ENCODE measurements at regions of chr4 and their contacts with region 1.

Region 1: DNA sequence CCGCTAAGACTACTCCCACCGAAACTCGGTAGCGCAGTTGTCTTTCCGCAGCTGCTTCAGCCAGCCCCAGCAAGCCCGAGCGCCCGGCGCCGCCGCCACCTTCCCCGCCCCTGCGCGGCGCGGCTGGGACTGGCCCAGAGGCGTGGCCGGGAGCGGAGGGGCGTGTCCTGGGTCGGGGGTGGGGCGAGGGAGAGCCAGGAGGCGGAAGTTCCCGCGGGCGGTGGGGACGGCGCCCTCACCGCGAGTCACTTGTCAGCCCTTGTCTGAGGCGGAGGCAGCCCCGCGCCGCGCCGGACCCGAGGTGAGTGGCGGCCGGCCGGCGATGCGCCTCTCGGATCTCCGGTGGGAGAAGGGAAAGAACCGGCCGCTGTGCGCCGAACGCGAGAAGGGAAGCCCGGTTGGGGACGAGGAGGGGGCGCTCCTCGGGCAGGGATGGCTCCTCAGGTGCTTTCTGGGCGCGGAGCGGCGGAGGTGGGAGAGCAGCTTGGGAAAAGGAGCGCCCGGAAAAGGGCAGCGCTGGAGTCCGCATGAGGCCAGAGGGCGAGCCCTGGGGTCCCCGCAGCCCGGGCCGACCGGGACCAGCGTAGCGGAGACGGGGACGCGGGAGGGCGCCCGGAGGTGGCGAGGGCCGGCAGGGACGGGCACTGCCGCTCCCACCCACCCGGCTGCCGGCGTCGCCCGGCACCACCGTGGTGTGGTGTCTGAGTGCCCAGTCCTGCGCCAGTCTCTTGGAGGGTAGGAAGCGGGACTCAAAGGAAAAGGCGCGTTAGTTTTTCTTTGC is at the start of gene PDLIM5:
- DNase-seq: peak; percentile 74 to 95
- H3K4me3 ChIP-seq: peak within 1 kb of the TSS; percentile 94 to 100
- H3K27ac ChIP-seq: peak within 1 kb of the TSS; percentile 100
- H3K4me1 ChIP-seq: peaks cover under 1 to 22% of the 10 kb centered on the region in 2 donors
- H3K27me3 ChIP-seq: no peaks in the 10 kb centered on the region
- CTCF ChIP-seq: no peak
- total RNA-seq, gene PDLIM5: 103 TPM

Region 2: DNA sequence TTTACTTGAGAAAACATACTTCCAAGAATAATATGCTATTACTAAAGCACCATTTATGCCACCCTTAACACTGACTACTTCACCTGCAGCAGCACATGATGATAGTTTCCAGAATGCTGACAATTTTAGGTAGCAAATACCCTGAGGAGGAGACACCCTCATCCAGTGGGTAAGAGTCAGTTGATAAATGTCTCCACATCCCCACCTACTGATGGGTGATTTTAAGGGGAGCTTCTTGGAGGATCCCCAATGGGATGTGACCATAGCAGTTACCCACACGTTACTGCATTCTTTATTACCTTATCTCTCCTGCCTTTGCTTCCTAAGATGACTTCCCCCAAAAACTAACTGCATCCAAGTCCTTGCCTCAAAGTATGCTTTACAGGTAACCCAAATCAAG is 375.4 kb before region 1 on chr4:
- intact Hi-C with region 1: no loop called
- DNase-seq: no peak
- H3K4me3 ChIP-seq: no peak overlapping the region
- H3K27ac ChIP-seq: no peak overlapping the region
- H3K4me1 ChIP-seq: no peaks in the 10 kb centered on the region
- H3K27me3 ChIP-seq: no peaks in the 10 kb centered on the region
- CTCF ChIP-seq: no peak

Region 3: GRCh38 chr4:94274912-94275311 is 177.0 kb before region 1 on chr4:
- intact Hi-C with region 1: no loop called
- DNase-seq: no peak
- H3K4me3 ChIP-seq: no peak overlapping the region
- H3K27ac ChIP-seq: no peak overlapping the region
- H3K4me1 ChIP-seq: no peaks in the 10 kb centered on the region
- H3K27me3 ChIP-seq: no peaks in the 10 kb centered on the region
- CTCF ChIP-seq: no peak

Region 4: GRCh38 chr4:94406668-94407437 is 45.0 kb before region 1 on chr4:
- intact Hi-C with region 1: loop called (anchors 1 kb)
- DNase-seq: peak in 1 of 2 donors; percentile 91
- H3K4me3 ChIP-seq: peak overlapping the region in 1 of 2 donors; percentile 57
- H3K27ac ChIP-seq: peak overlapping the region; percentile 80 to 82
- H3K4me1 ChIP-seq: peaks cover 10 to 26% of the 10 kb centered on the region in 2 donors
- H3K27me3 ChIP-seq: no peaks in the 10 kb centered on the region
- CTCF ChIP-seq: peak; percentile 34 to 88 (median 86)

Region 5: GRCh38 chr4:94507708-94508107 is 55.8 kb after region 1 on chr4:
- intact Hi-C with region 1: loop called (anchors 5 kb)
- DNase-seq: peak in 1 of 2 donors; percentile 86
- H3K4me3 ChIP-seq: no peak overlapping the region
- H3K27ac ChIP-seq: peak overlapping the region; percentile 43 to 70
- H3K4me1 ChIP-seq: peaks cover 7 to 65% of the 10 kb centered on the region in 2 donors
- H3K27me3 ChIP-seq: no peaks in the 10 kb centered on the region
- CTCF ChIP-seq: no peak

Region 6: GRCh38 chr4:94519925-94520789 is 68.3 kb after region 1 on chr4:
- intact Hi-C with region 1: loop called (anchors 5 kb)
- DNase-seq: no peak
- H3K4me3 ChIP-seq: no peak overlapping the region
- H3K27ac ChIP-seq: peak overlapping the region in 1 of 2 donors; percentile 17
- H3K4me1 ChIP-seq: peaks cover 0 to 80% of the 10 kb centered on the region in 2 donors
- H3K27me3 ChIP-seq: no peaks in the 10 kb centered on the region
- CTCF ChIP-seq: no peak

Region 7: GRCh38 chr4:94571298-94571697 is 119.4 kb after region 1 on chr4:
- intact Hi-C with region 1: loop called (anchors 5 kb)
- DNase-seq: no peak
- H3K4me3 ChIP-seq: no peak overlapping the region
- H3K27ac ChIP-seq: no peak overlapping the region
- H3K4me1 ChIP-seq: peaks cover 8 to 57% of the 10 kb centered on the region in 2 donors
- H3K27me3 ChIP-seq: no peaks in the 10 kb centered on the region
- CTCF ChIP-seq: no peak

Region 8: GRCh38 chr4:94595879-94596483 is 144.1 kb after region 1 on chr4:
- intact Hi-C with region 1: loop called (anchors 5 kb)
- DNase-seq: no peak
- H3K4me3 ChIP-seq: no peak overlapping the region
- H3K27ac ChIP-seq: no peak overlapping the region
- H3K4me1 ChIP-seq: peaks cover 0 to 8% of the 10 kb centered on the region in 2 donors
- H3K27me3 ChIP-seq: no peaks in the 10 kb centered on the region
- CTCF ChIP-seq: peak; percentile 46 to 65 (median 53)

Region 9: DNA sequence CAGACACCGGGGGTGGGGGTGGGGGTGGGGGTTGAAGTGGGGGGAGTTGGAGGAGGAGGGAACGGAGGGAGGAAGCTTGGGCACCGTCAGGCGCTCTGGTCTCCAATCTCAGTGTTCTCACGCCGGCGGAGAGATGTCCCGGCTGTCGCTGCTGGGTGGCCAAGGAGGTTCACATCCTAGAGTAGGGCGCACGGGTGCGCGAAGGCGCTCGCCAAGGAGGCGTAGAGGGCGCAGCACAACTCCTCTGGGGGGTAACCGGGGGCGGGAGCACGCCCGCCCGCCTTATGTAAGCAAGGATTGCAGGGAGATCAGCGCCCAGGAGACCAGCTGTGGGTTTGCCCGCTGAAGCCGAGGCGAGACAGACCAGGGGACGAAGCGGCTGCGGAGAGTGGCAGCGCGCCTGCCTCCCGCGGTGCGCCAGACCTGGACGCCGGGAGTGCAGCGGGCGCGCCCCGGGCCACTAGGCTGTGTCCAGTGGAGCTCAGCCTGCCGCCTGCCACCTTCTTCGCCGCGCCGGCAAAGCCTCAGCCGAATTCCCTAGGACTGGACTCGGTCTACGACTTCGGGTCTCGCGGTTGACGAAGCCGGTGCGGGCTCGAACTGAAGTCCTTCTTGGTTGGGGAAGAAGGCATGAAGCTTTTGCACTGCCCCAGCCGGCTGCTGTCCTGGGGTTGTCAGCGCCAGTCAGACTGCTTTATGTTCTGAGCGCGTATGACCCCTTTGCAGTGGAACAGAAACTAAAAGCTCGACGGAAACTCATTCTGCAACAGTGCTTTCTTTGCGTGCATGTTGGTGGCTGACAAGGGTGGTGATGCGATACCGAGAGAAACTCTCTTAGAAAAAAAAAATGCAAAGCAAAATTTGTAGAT is 1097.6 kb after region 1 on chr4:
- intact Hi-C with region 1: loop called (anchors 10 kb)
- DNase-seq: peak in 1 of 2 donors; percentile 80
- H3K4me3 ChIP-seq: peak overlapping the region; percentile 74 to 98
- H3K27ac ChIP-seq: peak overlapping the region; percentile 93 to 96
- H3K4me1 ChIP-seq: no peaks in the 10 kb centered on the region
- H3K27me3 ChIP-seq: no peaks in the 10 kb centered on the region
- CTCF ChIP-seq: no peak